ENCODE measurements at regions of chr1 and their contacts with region 1.

Region 1: DNA sequence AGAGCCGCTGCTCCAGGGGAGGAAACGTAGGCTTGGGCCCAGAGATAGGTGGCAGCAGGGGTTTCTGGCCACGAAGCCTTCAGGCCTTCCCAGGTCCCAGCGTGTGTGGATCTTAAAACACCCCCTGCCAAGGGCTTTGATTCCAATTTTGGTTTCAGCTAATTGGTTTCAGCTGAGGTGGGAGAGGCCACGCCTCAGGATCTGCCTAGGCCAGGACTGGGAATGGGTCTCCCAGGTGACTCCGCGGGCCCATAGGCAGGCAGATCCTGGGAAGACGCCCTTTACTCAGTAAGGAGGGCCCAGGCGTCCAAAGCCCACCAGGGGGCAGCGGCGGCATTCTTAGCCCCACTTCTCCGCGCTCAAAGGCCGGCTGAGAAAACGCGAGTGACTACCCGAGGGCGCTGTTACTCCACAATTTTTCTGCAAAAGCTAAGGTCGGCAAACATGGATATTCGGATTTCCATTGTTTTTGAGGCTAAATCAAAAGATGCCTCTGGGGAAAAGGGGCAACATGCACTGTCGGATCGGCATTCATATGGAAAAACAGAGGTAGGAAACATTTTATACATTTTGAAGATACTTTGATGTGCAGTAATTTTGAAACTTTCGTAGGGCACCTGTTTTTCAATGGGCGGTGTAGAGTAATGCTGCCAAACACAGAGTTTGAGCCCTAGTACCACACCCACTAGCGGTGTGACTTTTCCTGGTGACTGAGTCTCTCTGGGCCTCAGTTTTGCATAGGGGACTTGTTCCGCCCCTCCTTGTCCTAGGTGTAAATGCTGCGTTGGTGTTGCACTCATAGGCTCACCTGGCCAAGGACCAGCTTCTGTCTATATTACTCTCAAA is 31.8 kb upstream of the BCL10 start:
- DNase-seq: peak; percentile 78
- ATAC-seq: peak; percentile 99
- H3K4me3 ChIP-seq: no peak overlapping the region
- H3K27ac ChIP-seq: no peak overlapping the region
- H3K4me1 ChIP-seq: peaks cover 3 to 15% of the 10 kb centered on the region in 2 experiments; a peak in 2 of 4 replicates
- H3K27me3 ChIP-seq: no peaks in the 10 kb centered on the region
- CTCF ChIP-seq: peak; percentile 98 to 100 (median 99)
- POLR2A ChIP-seq: no peak
- RAD21 ChIP-seq: peak; percentile 100

Region 2: DNA sequence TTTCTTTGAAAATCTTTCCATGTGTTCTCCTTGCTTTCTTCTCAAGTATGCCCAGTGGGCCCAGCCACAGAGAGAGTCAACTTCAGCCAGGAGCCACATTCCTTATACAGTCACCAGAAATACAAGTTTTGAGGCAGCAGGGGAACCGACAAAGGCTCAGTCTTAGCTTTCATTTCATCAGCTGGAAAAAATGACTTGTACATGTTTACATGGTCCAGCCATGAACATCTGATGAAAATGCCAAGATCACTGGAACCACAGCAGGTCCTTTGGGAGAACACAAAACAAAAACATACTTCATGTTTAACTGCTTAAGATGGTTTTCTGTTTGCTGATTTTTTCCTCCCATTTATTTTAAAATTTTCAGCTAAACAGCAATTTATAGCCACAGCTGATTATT is 179.9 kb before region 1 on chr1:
- CTCF ChIA-PET with region 1: no interaction called
- POLR2A ChIA-PET with region 1: no interaction called
- RAD21 ChIA-PET with region 1: no interaction called
- intact Hi-C with region 1: no loop called
- DNase-seq: no peak
- ATAC-seq: no peak
- H3K4me3 ChIP-seq: no peak overlapping the region
- H3K27ac ChIP-seq: no peak overlapping the region
- H3K4me1 ChIP-seq: no peaks in the 10 kb centered on the region
- H3K27me3 ChIP-seq: no peaks in the 10 kb centered on the region
- CTCF ChIP-seq: no peak
- POLR2A ChIP-seq: no peak
- RAD21 ChIP-seq: no peak

Region 3: GRCh38 chr1:85330711-85331290 is 22.6 kb after region 1 on chr1:
- CTCF ChIA-PET with region 1: no interaction called
- POLR2A ChIA-PET with region 1: no interaction called
- RAD21 ChIA-PET with region 1: no interaction called
- intact Hi-C with region 1: no loop called
- DNase-seq: no peak
- ATAC-seq: no peak
- H3K4me3 ChIP-seq: peak overlapping the region in 1 of 2 experiments; percentile 15; a peak in 1 of 4 replicates
- H3K27ac ChIP-seq: peak overlapping the region; percentile 42
- H3K4me1 ChIP-seq: peaks cover 52 to 54% of the 10 kb centered on the region in 2 experiments
- H3K27me3 ChIP-seq: no peaks in the 10 kb centered on the region
- CTCF ChIP-seq: no peak
- POLR2A ChIP-seq: no peak
- RAD21 ChIP-seq: no peak

Region 4: DNA sequence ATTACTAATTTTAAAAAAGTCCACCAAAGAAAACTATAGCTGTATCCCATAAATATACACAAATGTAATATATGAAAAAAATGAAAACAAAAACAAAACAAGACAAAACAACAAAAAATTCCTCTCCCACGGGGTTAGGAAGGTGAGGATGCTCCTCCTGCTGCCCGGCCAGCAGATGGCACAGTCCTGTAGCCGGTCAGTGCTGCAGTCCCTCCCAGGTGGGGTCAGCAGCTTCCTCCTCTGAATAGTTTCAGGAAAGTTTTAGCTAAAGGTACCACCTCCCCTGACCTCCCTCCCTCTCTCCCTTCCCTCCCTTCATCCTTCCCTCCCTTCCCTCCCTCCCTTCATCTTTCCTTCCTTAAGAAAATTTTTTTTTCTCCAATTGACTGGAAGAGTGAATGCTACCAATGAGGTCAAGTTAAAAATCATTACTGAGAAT is 36.1 kb after region 1 on chr1:
- CTCF ChIA-PET with region 1: interaction called, 5 read pairs
- POLR2A ChIA-PET with region 1: no interaction called
- RAD21 ChIA-PET with region 1: no interaction called
- intact Hi-C with region 1: loop called (anchors 2 kb)
- DNase-seq: no peak
- ATAC-seq: peak; percentile 98
- H3K4me3 ChIP-seq: no peak overlapping the region
- H3K27ac ChIP-seq: no peak overlapping the region
- H3K4me1 ChIP-seq: peaks cover 29 to 32% of the 10 kb centered on the region in 2 experiments
- H3K27me3 ChIP-seq: no peaks in the 10 kb centered on the region
- CTCF ChIP-seq: peak; percentile 79 to 90 (median 84)
- POLR2A ChIP-seq: no peak
- RAD21 ChIP-seq: peak; percentile 82

Region 5: GRCh38 chr1:85502625-85503083 is 194.4 kb after region 1 on chr1:
- CTCF ChIA-PET with region 1: interaction called, 11 read pairs
- POLR2A ChIA-PET with region 1: no interaction called
- RAD21 ChIA-PET with region 1: interaction called in 1 of 2 experiments, 4 read pairs
- intact Hi-C with region 1: loop called (anchors 1 kb)
- DNase-seq: peak; percentile 59
- ATAC-seq: peak; percentile 94
- H3K4me3 ChIP-seq: no peak overlapping the region
- H3K27ac ChIP-seq: no peak overlapping the region
- H3K4me1 ChIP-seq: peaks cover 0 to 4% of the 10 kb centered on the region in 2 experiments; a peak in 1 of 4 replicates
- H3K27me3 ChIP-seq: no peaks in the 10 kb centered on the region
- CTCF ChIP-seq: peak; percentile 66 to 82 (median 71)
- POLR2A ChIP-seq: no peak
- RAD21 ChIP-seq: peak; percentile 68

Region 6: GRCh38 chr1:85607126-85607912 is 299.1 kb after region 1 on chr1:
- CTCF ChIA-PET with region 1: interaction called, 10 read pairs
- POLR2A ChIA-PET with region 1: no interaction called
- RAD21 ChIA-PET with region 1: no interaction called
- intact Hi-C with region 1: no loop called
- DNase-seq: peak; percentile 93
- ATAC-seq: peak; percentile 90
- H3K4me3 ChIP-seq: peak overlapping the region in 1 of 2 experiments; percentile 12; a peak in 2 of 4 replicates
- H3K27ac ChIP-seq: peak overlapping the region; percentile 47
- H3K4me1 ChIP-seq: peaks cover 39 to 57% of the 10 kb centered on the region in 2 experiments
- H3K27me3 ChIP-seq: no peaks in the 10 kb centered on the region
- CTCF ChIP-seq: no peak
- POLR2A ChIP-seq: no peak
- RAD21 ChIP-seq: peak; percentile 23; the same call in 1 of the 2 replicates

Region 7: GRCh38 chr1:85707990-85708828 is 400.0 kb after region 1 on chr1 and contains the start of gene ZNHIT6:
- CTCF ChIA-PET with region 1: interaction called, 3 read pairs
- POLR2A ChIA-PET with region 1: no interaction called
- RAD21 ChIA-PET with region 1: no interaction called
- intact Hi-C with region 1: loop called (anchors 5 kb)
- DNase-seq: peak; percentile 97
- ATAC-seq: peak; percentile 96
- H3K4me3 ChIP-seq: peak within 1 kb of the TSS; percentile 93 to 97
- H3K27ac ChIP-seq: peak within 1 kb of the TSS; percentile 73
- H3K4me1 ChIP-seq: peaks cover 13 to 19% of the 10 kb centered on the region in 2 experiments; a peak in 3 of 4 replicates
- H3K27me3 ChIP-seq: no peaks in the 10 kb centered on the region
- CTCF ChIP-seq: peak in 2 of 3 experiments; percentile 48 to 51; a peak in 4 of 6 replicates
- POLR2A ChIP-seq: peak; percentile 73
- RAD21 ChIP-seq: no peak; the same call in 1 of the 2 replicates
- total RNA-seq, gene ZNHIT6: 18.4 TPM

Region 8: GRCh38 chr1:86018283-86018923 is 710.2 kb after region 1 on chr1:
- CTCF ChIA-PET with region 1: no interaction called
- POLR2A ChIA-PET with region 1: no interaction called
- RAD21 ChIA-PET with region 1: no interaction called
- intact Hi-C with region 1: loop called (anchors 1 kb)
- DNase-seq: peak; percentile 12
- ATAC-seq: peak; percentile 70
- H3K4me3 ChIP-seq: no peak overlapping the region
- H3K27ac ChIP-seq: no peak overlapping the region
- H3K4me1 ChIP-seq: no peaks in the 10 kb centered on the region
- H3K27me3 ChIP-seq: no peaks in the 10 kb centered on the region
- CTCF ChIP-seq: peak; percentile 57 to 88 (median 77); a peak in 5 of 6 replicates
- POLR2A ChIP-seq: no peak
- RAD21 ChIP-seq: peak; percentile 54

Measured in HCT116 (cell line).